Activated CD4-positive, alpha-beta memory T cell treated with anti-CD3 and anti-CD28 coated beads, Interleukin-2, amount 10 ng/mL, durations not matched to agents 7 days and 5 days (primary cell): ENCODE measurements at regions of chr20 and their contacts with region 1.

Region 1: DNA sequence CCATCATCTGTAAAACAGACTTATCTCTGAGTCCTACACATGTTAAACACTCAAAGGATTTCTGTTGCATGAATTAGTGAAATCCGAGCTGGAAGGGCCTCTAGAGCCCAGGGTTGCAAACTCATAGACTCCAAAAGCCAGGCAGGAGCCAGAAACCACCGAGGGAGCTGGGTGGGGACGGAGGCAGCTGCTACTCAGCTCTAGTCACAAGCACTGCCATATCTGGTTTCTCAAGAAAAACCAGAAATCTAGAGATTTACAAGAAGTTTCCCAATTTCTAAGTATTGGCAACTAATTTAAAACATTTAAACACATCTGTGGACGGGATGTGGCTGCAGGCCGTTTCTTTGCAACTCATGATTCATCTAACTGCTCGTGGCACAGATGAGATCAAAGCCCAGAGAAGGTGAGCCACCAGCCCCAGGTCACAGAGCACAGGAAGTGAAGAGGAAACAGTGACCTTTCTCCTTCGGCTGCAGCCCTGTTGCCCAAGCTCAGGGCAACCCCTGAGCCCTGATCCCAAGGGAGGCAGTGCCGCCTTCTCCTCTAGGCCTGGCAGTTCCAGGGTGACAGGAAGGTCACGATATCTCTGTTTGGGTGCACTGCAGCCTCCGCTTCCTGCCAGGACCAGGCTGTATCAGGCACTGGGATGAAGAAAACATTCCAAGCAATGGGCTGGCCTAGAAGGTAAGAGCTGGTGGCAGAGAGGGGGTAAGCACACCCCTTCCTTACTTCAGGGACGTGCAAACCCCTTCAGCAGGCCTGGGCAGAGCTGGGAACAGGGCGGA is 26.4 kb upstream of the PTGIS start:
- DNase-seq: peak; percentile 91
- H3K4me3 Mint-ChIP-seq: peak overlapping the region; percentile 98
- H3K27ac Mint-ChIP-seq: peak overlapping the region; percentile 99
- H3K4me1 Mint-ChIP-seq: peaks cover 89% of the 10 kb centered on the region
- H3K27me3 Mint-ChIP-seq: no peaks in the 10 kb centered on the region

Region 2: DNA sequence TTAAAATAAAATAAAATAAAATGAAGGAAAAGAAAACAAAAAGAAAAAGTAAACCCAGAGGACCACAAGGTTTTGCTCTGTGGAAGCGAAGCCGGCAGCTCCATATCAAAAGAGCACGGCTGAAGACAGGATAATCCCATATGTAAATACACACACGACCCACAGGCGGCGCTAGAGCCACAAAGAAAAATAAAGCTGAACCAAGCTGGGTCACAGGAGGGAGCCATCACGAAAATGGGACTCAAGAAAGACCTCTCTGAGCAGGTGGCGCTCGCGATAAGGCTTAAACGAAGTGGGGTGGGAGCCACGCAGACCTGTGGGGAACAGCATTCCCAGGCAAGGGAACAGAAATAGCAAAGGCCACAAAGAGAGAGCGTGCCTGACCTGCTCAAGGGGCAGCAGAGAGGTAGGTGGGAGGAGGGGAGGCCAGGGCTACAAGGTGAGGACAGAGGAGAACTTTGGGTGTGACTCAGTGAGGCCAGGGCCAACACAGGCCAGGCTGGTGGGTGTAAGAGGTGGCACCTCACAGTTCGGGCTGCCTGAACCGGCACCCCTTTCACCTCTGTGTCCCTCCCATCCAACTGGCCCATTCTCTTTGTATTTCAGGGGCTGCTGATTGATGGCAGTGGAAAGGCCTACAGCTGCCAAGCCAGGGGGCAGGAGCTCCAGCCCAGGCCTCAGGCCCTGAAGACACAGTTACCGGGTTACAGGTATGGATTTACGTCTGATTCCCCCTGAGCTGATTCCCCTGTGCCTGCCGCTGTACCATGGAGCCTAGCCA is 52.4 kb before region 1 on chr20:
- CTCF ChIA-PET with region 1: interaction called, 114 read pairs
- POLR2A ChIA-PET with region 1: interaction called, 184 read pairs
- DNase-seq: peak; percentile 84
- H3K4me3 Mint-ChIP-seq: no peak overlapping the region
- H3K27ac Mint-ChIP-seq: peak overlapping the region; percentile 80
- H3K4me1 Mint-ChIP-seq: peaks cover 33% of the 10 kb centered on the region
- H3K27me3 Mint-ChIP-seq: peaks cover 2% of the 10 kb centered on the region

Region 3: GRCh38 chr20:49567421-49568334 is 26.7 kb before region 1 on chr20 and contains the start of gene PTGIS:
- CTCF ChIA-PET with region 1: interaction called, 3 read pairs
- POLR2A ChIA-PET with region 1: interaction called, 20 read pairs
- DNase-seq: no peak
- H3K4me3 Mint-ChIP-seq: no peak within 1 kb of the TSS
- H3K27ac Mint-ChIP-seq: no peak within 1 kb of the TSS
- H3K4me1 Mint-ChIP-seq: peaks cover 27% of the 10 kb centered on the region
- H3K27me3 Mint-ChIP-seq: peaks cover 54% of the 10 kb centered on the region
- total RNA-seq, gene PTGIS: 1.6 to 2.8 TPM

Region 4: DNA sequence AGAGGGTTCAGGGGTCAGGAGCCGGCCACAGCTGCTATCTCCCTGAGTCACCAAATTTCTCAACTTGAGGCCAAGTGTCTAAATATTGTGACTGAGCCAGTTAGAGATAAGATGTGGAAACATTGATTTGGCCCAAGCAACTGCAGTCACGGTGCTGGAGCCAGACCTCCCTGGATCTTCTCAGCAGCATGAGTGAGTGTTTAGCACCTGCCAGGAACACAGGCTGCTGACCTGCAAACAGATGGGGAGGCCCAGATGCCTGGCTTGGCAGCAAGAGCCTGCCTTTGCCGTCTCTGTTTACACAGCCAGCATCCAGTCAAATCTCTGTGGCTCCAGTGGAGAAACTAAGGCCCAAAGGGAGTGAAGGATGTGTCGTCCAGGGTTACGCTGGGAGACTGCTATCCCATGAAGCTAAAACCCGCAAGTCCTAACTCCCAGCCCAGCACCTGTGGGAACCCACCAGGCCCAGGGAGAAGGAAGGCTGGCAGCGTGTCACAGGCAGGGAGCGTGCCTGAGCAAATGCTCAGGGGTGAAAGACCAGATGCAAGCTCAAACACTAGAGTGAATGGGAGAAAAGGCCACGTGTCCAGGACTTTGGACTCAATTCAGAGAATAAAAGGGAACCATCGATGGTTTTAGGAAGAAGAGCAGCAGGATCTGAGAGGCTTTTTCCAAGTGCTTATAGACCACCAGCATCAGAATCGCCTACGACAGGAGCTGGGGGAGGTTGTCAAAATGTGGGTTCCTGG is 10.5 kb before region 1 on chr20:
- CTCF ChIA-PET with region 1: interaction called, 5 read pairs
- POLR2A ChIA-PET with region 1: interaction called, 86 read pairs
- DNase-seq: no peak
- H3K4me3 Mint-ChIP-seq: no peak overlapping the region
- H3K27ac Mint-ChIP-seq: no peak overlapping the region
- H3K4me1 Mint-ChIP-seq: peaks cover 34% of the 10 kb centered on the region
- H3K27me3 Mint-ChIP-seq: peaks cover 4% of the 10 kb centered on the region

Region 5: GRCh38 chr20:49668181-49668877 is 74.0 kb after region 1 on chr20:
- CTCF ChIA-PET with region 1: interaction called, 4 read pairs
- POLR2A ChIA-PET with region 1: interaction called, 17 read pairs
- DNase-seq: peak; percentile 78
- H3K4me3 Mint-ChIP-seq: peak overlapping the region; percentile 70
- H3K27ac Mint-ChIP-seq: peak overlapping the region; percentile 84
- H3K4me1 Mint-ChIP-seq: peaks cover 50% of the 10 kb centered on the region
- H3K27me3 Mint-ChIP-seq: peaks cover 2% of the 10 kb centered on the region

Region 6: GRCh38 chr20:49812463-49813304 is 218.3 kb after region 1 on chr20 and contains the start of gene SLC9A8:
- CTCF ChIA-PET with region 1: no interaction called
- POLR2A ChIA-PET with region 1: interaction called, 33 read pairs
- DNase-seq: peak; percentile 83
- H3K4me3 Mint-ChIP-seq: peak within 1 kb of the TSS; percentile 94
- H3K27ac Mint-ChIP-seq: peak within 1 kb of the TSS; percentile 93
- H3K4me1 Mint-ChIP-seq: peaks cover 44% of the 10 kb centered on the region
- H3K27me3 Mint-ChIP-seq: no peaks in the 10 kb centered on the region
- total RNA-seq, gene SLC9A8: 18.0 to 21.0 TPM

Region 7: GRCh38 chr20:49936153-49937027 is 342.1 kb after region 1 on chr20 and contains the start of gene RNF114:
- CTCF ChIA-PET with region 1: interaction called, 3 read pairs
- POLR2A ChIA-PET with region 1: interaction called, 10 read pairs
- DNase-seq: peak; percentile 92
- H3K4me3 Mint-ChIP-seq: peak within 1 kb of the TSS; percentile 91
- H3K27ac Mint-ChIP-seq: peak within 1 kb of the TSS; percentile 91
- H3K4me1 Mint-ChIP-seq: peaks cover 52% of the 10 kb centered on the region
- H3K27me3 Mint-ChIP-seq: no peaks in the 10 kb centered on the region
- total RNA-seq, gene RNF114: 66.4 to 76.4 TPM